Heart left ventricle (tissue), 16 donors: ENCODE measurements at regions of chr2 and their contacts with region 1.

Region 1: GRCh38 chr2:43343573-43344304 is 117.3 kb upstream of the ZFP36L2 start:
- DNase-seq: peak in 4 of 5 donors; percentile 84 to 85 (median 84)
- ATAC-seq: peak; percentile 59 to 81 (median 72)
- H3K4me3 ChIP-seq: no peak overlapping the region
- H3K27ac ChIP-seq: peak overlapping the region; percentile 66 to 88 (median 82)
- H3K4me1 ChIP-seq: peaks cover 17 to 89% (median 76%) of the 10 kb centered on the region in 12 donors
- H3K27me3 ChIP-seq: no peaks in the 10 kb centered on the region
- CTCF ChIP-seq: no peak
- POLR2A ChIP-seq: no peak

Region 2: GRCh38 chr2:43269074-43269572 is 74.6 kb before region 1 on chr2:
- intact Hi-C with region 1: loop called in 1 of 10 experiments (anchors 5 kb)
- DNase-seq: peak; percentile 70 to 94 (median 91)
- ATAC-seq: peak; percentile 51 to 86 (median 84)
- H3K4me3 ChIP-seq: no peak overlapping the region
- H3K27ac ChIP-seq: peak overlapping the region; percentile 63 to 90 (median 78)
- H3K4me1 ChIP-seq: peaks cover 18 to 73% (median 54%) of the 10 kb centered on the region in 12 donors
- H3K27me3 ChIP-seq: no peaks in the 10 kb centered on the region
- CTCF ChIP-seq: peak in 3 of 12 donors; percentile 18 to 28 (median 19)
- POLR2A ChIP-seq: no peak

Region 3: GRCh38 chr2:43408407-43409160 is 64.8 kb after region 1 on chr2:
- intact Hi-C with region 1: loop called in 1 of 10 experiments (anchors 10 kb)
- DNase-seq: no peak
- ATAC-seq: peak in 3 of 4 donors; percentile 17 to 62 (median 57)
- H3K4me3 ChIP-seq: no peak overlapping the region
- H3K27ac ChIP-seq: peak overlapping the region in 3 of 12 donors; percentile 16 to 73 (median 27)
- H3K4me1 ChIP-seq: peaks cover 0 to 52% (median 29%) of the 10 kb centered on the region in 12 donors
- H3K27me3 ChIP-seq: no peaks in the 10 kb centered on the region
- CTCF ChIP-seq: no peak
- POLR2A ChIP-seq: no peak

Region 4: GRCh38 chr2:43461453-43462073 is 117.8 kb after region 1 on chr2:
- intact Hi-C with region 1: loop called in 1 of 10 experiments (anchors 10 kb)
- DNase-seq: no peak
- ATAC-seq: peak in 2 of 4 donors; percentile 8 to 50
- H3K4me3 ChIP-seq: no peak overlapping the region
- H3K27ac ChIP-seq: peak overlapping the region in 3 of 12 donors; percentile 32 to 69 (median 64)
- H3K4me1 ChIP-seq: peaks cover 0 to 80% (median 29%) of the 10 kb centered on the region in 12 donors
- H3K27me3 ChIP-seq: no peaks in the 10 kb centered on the region
- CTCF ChIP-seq: no peak
- POLR2A ChIP-seq: no peak